Posterior vena cava (tissue), 2 donors: ENCODE measurements at regions of chr1 and their contacts with region 1.

Region 1: GRCh38 chr1:154087574-154087973 is 67.3 kb downstream of the NUP210L start:
- DNase-seq: no peak

Region 2: GRCh38 chr1:153919876-153920852 is 167.4 kb before region 1 on chr1:
- intact Hi-C with region 1: no loop called
- DNase-seq: no peak

Region 3: GRCh38 chr1:155099331-155099730 is 1011.8 kb after region 1 on chr1:
- intact Hi-C with region 1: loop called in 1 of 2 experiments (anchors 5 kb)
- DNase-seq: no peak